Activated CD4-positive, alpha-beta memory T cell treated with anti-CD3 and anti-CD28 coated beads for 36 hours (primary cell): ENCODE measurements at regions of chr11 and their contacts with region 1.

Region 1: DNA sequence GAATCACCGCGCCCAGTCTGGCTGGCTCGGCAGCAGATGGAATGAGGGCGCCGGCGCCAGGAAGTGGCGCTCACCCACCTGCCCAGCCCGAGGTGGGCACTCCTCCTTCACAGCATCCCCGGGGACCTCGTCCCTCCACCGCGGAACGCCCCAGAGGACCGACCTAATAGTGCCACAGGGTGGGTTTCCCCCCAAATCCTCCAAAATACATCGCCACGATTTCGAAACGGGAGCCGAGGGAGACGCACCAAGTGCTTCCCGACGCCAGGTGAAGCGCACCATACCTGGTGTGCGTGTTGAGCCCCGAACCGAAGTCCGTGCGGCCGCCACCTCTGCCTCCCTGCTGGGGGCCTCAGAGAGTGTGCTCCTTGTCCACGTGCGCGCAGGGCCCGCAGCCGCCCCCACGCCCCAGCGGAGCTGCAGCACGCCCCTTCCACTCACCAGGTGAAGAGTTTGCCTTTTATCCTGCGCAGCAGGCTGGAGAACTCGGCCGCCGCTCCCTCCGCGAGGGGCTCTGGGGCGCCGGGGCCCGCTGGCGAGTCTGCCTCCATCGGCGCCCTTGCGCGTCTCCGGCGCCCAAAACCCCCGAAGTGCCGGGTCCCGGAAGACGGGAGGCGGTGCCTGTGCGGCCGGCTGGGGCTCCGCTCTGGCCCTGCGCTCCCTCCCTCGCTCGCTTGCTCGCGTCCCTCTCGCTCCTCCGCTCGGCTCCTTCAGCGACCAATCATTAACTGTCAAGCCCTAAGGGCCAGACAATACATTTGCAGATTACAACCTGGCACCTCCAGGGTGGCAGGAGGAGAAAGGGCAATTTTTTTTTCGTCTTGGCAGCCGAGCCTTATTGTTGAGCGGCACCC is at the start of gene SLC35F2:
- DNase-seq: peak; percentile 83
- H3K4me3 Mint-ChIP-seq: peak within 1 kb of the TSS; percentile 95
- H3K27ac Mint-ChIP-seq: peak within 1 kb of the TSS; percentile 92
- H3K4me1 Mint-ChIP-seq: peaks cover 31% of the 10 kb centered on the region
- H3K27me3 Mint-ChIP-seq: no peaks in the 10 kb centered on the region
- total RNA-seq, gene SLC35F2: 22.8 to 24.5 TPM

Region 2: DNA sequence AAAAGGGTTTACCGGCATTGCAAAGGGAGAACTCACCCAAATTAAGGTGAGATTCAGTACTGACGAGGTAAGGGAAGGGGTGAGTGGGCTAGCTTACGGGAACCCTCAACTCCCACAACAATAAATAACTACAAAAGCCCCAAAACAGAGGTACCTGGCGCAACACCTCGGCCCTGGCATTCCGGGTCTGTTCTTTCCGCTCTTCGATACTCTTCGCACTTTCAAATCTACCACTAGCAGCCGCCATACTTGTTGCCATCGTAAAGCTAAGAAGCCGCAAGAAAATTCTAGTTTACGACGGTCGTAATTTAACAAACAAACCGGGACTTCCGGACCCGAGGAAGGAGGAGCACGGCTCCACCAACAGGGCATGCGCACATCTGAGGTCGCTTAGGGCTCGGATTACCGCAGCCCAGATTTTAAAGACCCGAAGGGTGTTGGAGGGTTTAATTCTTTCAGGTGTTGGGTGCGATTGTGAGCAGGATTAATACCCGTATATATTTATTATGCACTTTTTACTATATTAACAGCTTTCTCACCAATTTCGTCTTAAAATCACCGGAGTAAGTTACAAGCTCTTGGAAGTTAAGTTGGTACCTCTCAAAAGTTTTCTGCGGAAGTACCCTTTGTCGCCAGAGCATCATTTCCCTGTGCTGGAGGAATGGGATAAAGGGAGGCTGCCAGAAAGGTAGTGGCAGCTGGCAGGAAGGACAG is 400.7 kb before region 1 on chr11 and contains the start of gene CWF19L2:
- CTCF ChIA-PET with region 1: no interaction called
- POLR2A ChIA-PET with region 1: no interaction called
- intact Hi-C with region 1: loop called (anchors 5 kb)
- DNase-seq: peak; percentile 94
- H3K4me3 Mint-ChIP-seq: peak within 1 kb of the TSS; percentile 89
- H3K27ac Mint-ChIP-seq: peak within 1 kb of the TSS; percentile 77
- H3K4me1 Mint-ChIP-seq: peaks cover 23% of the 10 kb centered on the region
- H3K27me3 Mint-ChIP-seq: no peaks in the 10 kb centered on the region
- total RNA-seq, gene CWF19L2: 14.0 to 14.4 TPM

Region 3: DNA sequence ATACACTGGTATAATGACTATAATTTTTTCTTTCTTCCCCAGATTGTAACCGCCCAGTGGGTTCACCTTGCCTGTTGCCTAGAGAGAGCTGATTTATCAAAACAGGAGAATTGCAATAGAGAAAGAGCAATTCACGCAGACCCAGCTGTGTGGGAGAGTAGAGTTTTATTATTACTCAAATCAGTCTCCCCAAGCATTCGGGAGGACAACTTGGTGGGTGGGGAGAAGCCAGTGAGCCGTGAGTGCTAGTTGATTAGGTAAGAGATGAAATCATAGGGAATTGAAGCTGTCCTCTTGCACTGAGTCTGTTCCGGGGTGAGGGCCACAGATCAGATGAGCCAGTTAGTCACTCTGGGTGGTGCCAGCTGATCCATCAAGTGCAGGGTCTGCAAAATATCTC is 73.0 kb before region 1 on chr11:
- CTCF ChIA-PET with region 1: no interaction called
- POLR2A ChIA-PET with region 1: no interaction called
- intact Hi-C with region 1: loop called (anchors 2 kb)
- DNase-seq: peak; percentile 79
- H3K4me3 Mint-ChIP-seq: no peak overlapping the region
- H3K27ac Mint-ChIP-seq: peak overlapping the region; percentile 49
- H3K4me1 Mint-ChIP-seq: peaks cover 15% of the 10 kb centered on the region
- H3K27me3 Mint-ChIP-seq: no peaks in the 10 kb centered on the region

Region 4: GRCh38 chr11:107799218-107799859 is 59.1 kb before region 1 on chr11:
- CTCF ChIA-PET with region 1: interaction called, 3 read pairs
- POLR2A ChIA-PET with region 1: no interaction called
- intact Hi-C with region 1: loop called (anchors 1 kb)
- DNase-seq: peak; percentile 77
- H3K4me3 Mint-ChIP-seq: no peak overlapping the region
- H3K27ac Mint-ChIP-seq: no peak overlapping the region
- H3K4me1 Mint-ChIP-seq: no peaks in the 10 kb centered on the region
- H3K27me3 Mint-ChIP-seq: no peaks in the 10 kb centered on the region

Region 5: DNA sequence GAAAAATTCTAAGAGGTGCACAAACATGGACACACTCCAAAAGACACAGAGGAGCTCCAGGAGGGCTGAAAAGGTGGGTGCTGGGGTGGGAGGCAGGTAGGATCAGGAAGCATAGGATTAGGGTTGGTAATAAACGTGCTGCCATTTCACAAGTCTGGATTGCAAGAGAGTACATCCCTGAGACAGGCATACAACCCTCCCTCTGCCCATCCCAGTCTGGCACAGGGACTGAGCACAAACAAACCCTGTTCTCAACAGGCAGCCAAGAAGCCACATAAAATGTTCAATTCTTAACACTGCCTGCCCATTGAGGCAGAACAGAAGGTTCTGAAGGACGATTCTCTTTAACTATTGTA is 18.3 kb before region 1 on chr11:
- CTCF ChIA-PET with region 1: no interaction called
- POLR2A ChIA-PET with region 1: interaction called, 4 read pairs
- intact Hi-C with region 1: loop called (anchors 1 kb)
- DNase-seq: no peak
- H3K4me3 Mint-ChIP-seq: peak overlapping the region; percentile 53
- H3K27ac Mint-ChIP-seq: peak overlapping the region; percentile 98
- H3K4me1 Mint-ChIP-seq: peaks cover 71% of the 10 kb centered on the region
- H3K27me3 Mint-ChIP-seq: no peaks in the 10 kb centered on the region

Region 6: GRCh38 chr11:107928046-107928766 is 69.8 kb after region 1 on chr11 and contains the start of gene RAB39A:
- CTCF ChIA-PET with region 1: no interaction called
- POLR2A ChIA-PET with region 1: no interaction called
- intact Hi-C with region 1: loop called (anchors 2 kb)
- DNase-seq: peak; percentile 85
- H3K4me3 Mint-ChIP-seq: peak within 1 kb of the TSS; percentile 66
- H3K27ac Mint-ChIP-seq: no peak within 1 kb of the TSS
- H3K4me1 Mint-ChIP-seq: peaks cover 13% of the 10 kb centered on the region
- H3K27me3 Mint-ChIP-seq: peaks cover 34% of the 10 kb centered on the region
- total RNA-seq, gene RAB39A: 0.29 to 0.71 TPM